Panc1 (cell line): ENCODE measurements at regions of chr12 and their contacts with region 1.

Region 1: GRCh38 chr12:52949413-52950331 is 754 bp downstream of the KRT18 start:
- DNase-seq: peak; percentile 90
- ATAC-seq: peak; percentile 64
- H3K4me3 ChIP-seq: peak overlapping the region; percentile 81 to 100
- H3K27ac ChIP-seq: peak overlapping the region; percentile 98
- H3K4me1 ChIP-seq: peaks cover 55% of the 10 kb centered on the region
- H3K27me3 ChIP-seq: no peaks in the 10 kb centered on the region
- CTCF ChIP-seq: no peak

Region 2: GRCh38 chr12:52260361-52261205 is 689.1 kb before region 1 on chr12:
- CTCF ChIA-PET with region 1: no interaction called
- POLR2A ChIA-PET with region 1: no interaction called
- in situ Hi-C with region 1: no loop called
- intact Hi-C with region 1: no loop called
- DNase-seq: no peak
- ATAC-seq: no peak
- H3K4me3 ChIP-seq: no peak overlapping the region
- H3K27ac ChIP-seq: peak overlapping the region; percentile 48
- H3K4me1 ChIP-seq: no peaks in the 10 kb centered on the region
- H3K27me3 ChIP-seq: no peaks in the 10 kb centered on the region
- CTCF ChIP-seq: no peak

Region 3: GRCh38 chr12:52307836-52308805 is 641.6 kb before region 1 on chr12:
- CTCF ChIA-PET with region 1: interaction called, 10 read pairs
- POLR2A ChIA-PET with region 1: no interaction called
- in situ Hi-C with region 1: no loop called
- intact Hi-C with region 1: no loop called
- DNase-seq: no peak
- ATAC-seq: peak; percentile 94
- H3K4me3 ChIP-seq: peak overlapping the region; percentile 46 to 59
- H3K27ac ChIP-seq: peak overlapping the region; percentile 71
- H3K4me1 ChIP-seq: peaks cover 10% of the 10 kb centered on the region
- H3K27me3 ChIP-seq: no peaks in the 10 kb centered on the region
- CTCF ChIP-seq: peak; percentile 31; the same call in 1 of the 2 replicates

Region 4: GRCh38 chr12:52848661-52849255 is 100.9 kb before region 1 on chr12 and contains the start of gene KRT78:
- CTCF ChIA-PET with region 1: no interaction called
- POLR2A ChIA-PET with region 1: interaction called, 13 read pairs
- in situ Hi-C with region 1: no loop called
- intact Hi-C with region 1: no loop called
- DNase-seq: no peak
- ATAC-seq: no peak
- H3K4me3 ChIP-seq: no peak within 1 kb of the TSS
- H3K27ac ChIP-seq: no peak within 1 kb of the TSS
- H3K4me1 ChIP-seq: no peaks in the 10 kb centered on the region
- H3K27me3 ChIP-seq: no peaks in the 10 kb centered on the region
- CTCF ChIP-seq: no peak
- total RNA-seq, gene KRT78: not detected

Region 5: GRCh38 chr12:52879394-52880351 is 70.0 kb before region 1 on chr12:
- CTCF ChIA-PET with region 1: interaction called, 5 read pairs
- POLR2A ChIA-PET with region 1: interaction called, 13 read pairs
- in situ Hi-C with region 1: no loop called
- intact Hi-C with region 1: no loop called
- DNase-seq: peak; percentile 77
- ATAC-seq: peak; percentile 92
- H3K4me3 ChIP-seq: peak overlapping the region; percentile 32 to 66
- H3K27ac ChIP-seq: peak overlapping the region; percentile 52; the same call in 1 of the 2 replicates
- H3K4me1 ChIP-seq: peaks cover 14% of the 10 kb centered on the region
- H3K27me3 ChIP-seq: no peaks in the 10 kb centered on the region
- CTCF ChIP-seq: peak; percentile 98

Region 6: DNA sequence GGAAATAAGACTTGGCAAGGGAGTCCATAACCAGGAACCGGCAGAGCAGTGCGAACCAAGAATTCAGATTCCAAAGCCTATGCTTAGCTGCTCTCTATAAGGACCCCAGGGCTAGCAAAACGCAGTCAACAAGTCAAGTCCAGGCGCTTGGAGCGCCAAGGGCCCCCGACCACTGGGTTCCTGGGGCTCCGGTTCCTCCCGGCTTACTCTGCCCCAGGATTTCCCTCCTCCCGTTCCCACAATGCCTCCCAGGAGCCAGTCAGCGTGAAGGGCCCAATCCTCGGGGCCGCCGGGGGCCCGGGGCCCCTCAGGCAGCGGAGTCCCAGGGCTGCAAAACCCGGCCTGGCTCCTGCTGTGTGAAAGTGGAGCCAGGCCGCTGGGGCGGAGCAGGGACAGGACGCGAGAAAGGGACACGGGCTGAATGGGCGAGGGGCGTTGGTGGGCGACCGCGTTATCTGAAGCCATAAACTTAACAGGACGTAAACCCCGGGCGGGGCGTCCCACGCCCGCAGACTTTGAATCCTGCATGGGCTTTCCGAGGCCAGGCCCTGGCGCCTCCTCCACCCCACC is 46.3 kb before region 1 on chr12:
- CTCF ChIA-PET with region 1: interaction called, 10 read pairs
- POLR2A ChIA-PET with region 1: interaction called, 14 read pairs
- in situ Hi-C with region 1: no loop called
- intact Hi-C with region 1: loop called (anchors 2 kb)
- DNase-seq: no peak
- ATAC-seq: peak; percentile 44
- H3K4me3 ChIP-seq: peak overlapping the region; percentile 70 to 87
- H3K27ac ChIP-seq: peak overlapping the region; percentile 86
- H3K4me1 ChIP-seq: peaks cover 62% of the 10 kb centered on the region
- H3K27me3 ChIP-seq: no peaks in the 10 kb centered on the region
- CTCF ChIP-seq: no peak

Region 7: GRCh38 chr12:52924764-52925716 is 24.6 kb before region 1 on chr12:
- CTCF ChIA-PET with region 1: interaction called, 10 read pairs
- POLR2A ChIA-PET with region 1: interaction called, 12 read pairs
- in situ Hi-C with region 1: no loop called
- intact Hi-C with region 1: no loop called
- DNase-seq: no peak
- ATAC-seq: peak; percentile 87
- H3K4me3 ChIP-seq: peak overlapping the region in 1 of 2 experiments; percentile 30; a peak in 2 of 4 replicates
- H3K27ac ChIP-seq: peak overlapping the region; percentile 100
- H3K4me1 ChIP-seq: peaks cover 58% of the 10 kb centered on the region
- H3K27me3 ChIP-seq: no peaks in the 10 kb centered on the region
- CTCF ChIP-seq: no peak

Region 8: DNA sequence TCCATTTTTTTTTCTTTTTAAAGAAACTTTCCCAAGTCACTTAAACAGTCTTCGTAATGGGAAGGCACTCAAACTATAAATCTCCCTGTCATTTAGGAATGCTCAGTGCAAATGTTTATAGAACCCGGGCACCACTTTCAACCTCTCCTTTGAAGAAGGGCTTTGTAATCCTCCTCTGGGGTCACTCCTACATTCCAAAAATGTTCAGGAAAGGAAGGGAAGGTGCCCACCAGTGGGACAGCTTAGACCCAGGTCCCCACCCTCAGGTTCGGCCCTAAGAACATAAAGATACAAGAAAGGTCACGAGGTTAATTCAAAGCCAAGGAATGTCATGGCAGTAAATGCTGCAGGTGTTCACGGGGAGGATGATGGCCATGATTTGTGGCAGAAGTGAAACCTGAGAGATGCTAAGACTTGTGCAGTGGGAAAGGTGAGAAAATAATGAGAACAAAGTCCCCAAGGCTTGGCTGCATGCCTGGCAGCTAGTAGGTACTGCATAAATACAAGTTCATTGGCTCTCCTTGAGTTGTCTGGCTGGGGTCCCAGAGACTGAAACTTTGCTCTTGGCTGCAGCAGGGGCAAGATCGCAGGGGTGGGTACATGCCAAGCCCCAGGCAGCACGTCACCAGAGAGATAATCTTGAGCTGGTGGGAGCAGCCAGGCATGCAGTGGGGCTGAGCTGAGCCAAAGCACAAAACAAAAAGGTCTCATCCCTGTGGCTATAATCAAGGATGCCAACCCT is 20.3 kb after region 1 on chr12:
- CTCF ChIA-PET with region 1: interaction called, 14 read pairs
- POLR2A ChIA-PET with region 1: interaction called, 13 read pairs
- in situ Hi-C with region 1: no loop called
- intact Hi-C with region 1: no loop called
- DNase-seq: no peak
- ATAC-seq: peak; percentile 61
- H3K4me3 ChIP-seq: no peak overlapping the region
- H3K27ac ChIP-seq: peak overlapping the region; percentile 95
- H3K4me1 ChIP-seq: peaks cover 53% of the 10 kb centered on the region
- H3K27me3 ChIP-seq: no peaks in the 10 kb centered on the region
- CTCF ChIP-seq: no peak

Region 9: DNA sequence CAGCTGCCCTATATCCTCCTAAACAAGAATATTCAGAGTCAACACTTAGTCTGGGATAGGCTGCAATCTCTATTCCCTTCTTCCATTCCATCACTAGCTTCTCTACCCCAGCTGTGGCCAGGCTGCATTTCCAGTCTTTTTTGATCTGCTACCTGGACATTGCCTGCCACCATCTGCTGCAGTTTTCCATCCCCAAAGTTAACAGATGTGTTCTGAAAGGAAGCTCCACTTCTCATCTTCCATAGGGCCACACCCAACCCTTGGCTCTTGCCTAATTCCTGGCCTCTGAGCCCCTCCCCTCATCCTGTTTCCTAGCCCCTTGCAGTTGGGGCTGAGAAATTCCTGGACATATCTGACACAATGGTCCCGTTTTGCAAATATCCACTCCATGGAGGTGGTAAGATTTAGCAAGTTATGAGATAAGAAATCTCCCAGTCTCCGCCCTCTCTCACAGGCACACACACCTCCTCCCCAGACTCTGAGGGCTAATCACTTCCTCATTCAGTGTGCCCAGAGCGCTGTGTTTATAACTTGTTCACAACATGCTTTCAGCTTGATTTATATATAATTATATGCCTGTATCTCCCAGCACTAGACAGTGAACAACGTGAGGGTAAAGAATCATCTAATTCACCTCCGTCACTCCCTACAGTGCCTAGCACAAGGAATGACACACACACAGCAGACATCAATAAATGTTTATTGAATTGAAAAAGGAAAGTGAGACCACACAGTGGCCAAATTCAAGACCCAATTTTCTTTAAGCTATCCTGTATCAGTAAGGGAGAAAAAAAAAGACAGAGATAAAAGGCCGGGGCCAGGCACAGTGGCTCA is 1225.7 kb after region 1 on chr12:
- CTCF ChIA-PET with region 1: no interaction called
- POLR2A ChIA-PET with region 1: no interaction called
- in situ Hi-C with region 1: no loop called
- intact Hi-C with region 1: no loop called
- DNase-seq: no peak
- ATAC-seq: no peak
- H3K4me3 ChIP-seq: no peak overlapping the region
- H3K27ac ChIP-seq: no peak overlapping the region
- H3K4me1 ChIP-seq: peaks cover 3% of the 10 kb centered on the region; the same call in 1 of the 2 replicates
- H3K27me3 ChIP-seq: peaks cover 13% of the 10 kb centered on the region
- CTCF ChIP-seq: no peak